A549 (cell line): ENCODE measurements at regions of chr2 and their contacts with region 1.

Region 1: DNA sequence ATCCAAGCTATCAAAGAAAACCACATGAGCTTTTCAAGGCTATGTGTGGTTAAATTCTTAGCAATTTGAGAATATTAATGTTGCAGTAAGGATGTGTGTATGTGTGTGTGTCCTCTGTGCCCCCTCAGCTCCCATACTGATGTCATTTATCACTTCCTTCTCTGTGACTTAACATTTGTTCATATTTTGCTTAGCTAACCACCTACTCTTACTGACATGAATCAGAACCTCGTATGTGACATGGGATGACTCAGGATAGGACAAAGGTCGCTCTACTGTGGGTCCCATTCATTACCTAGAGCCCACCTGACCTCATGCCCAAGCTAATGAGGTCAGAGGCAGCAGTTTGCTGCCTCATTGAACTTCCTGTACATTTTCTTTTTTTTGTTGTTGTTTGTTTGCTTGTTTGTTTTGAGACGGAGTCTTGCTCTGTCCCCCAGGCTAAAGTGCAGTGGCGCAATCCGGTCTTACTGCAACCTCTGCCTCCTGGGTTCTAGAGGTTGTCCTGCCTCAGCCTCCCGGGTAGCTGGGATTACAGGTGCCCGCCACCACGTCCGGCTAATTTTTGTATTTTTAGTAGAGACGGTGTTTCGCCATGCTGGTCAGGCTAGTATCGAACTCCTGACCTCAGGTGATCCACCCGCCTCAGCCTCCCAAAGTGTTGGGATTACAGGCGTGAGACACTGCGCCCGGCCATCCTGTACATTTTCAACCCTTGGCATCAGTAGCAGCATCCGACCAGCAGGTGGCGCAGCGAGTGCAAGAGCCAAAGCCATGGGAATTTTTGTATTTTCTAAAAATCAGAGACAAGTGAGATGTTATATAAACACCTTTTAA is 36.4 kb downstream of the MOGAT1 start:
- DNase-seq: peak; percentile 25 to 78
- ATAC-seq: peak in 1 of 2 experiments; percentile 64; a peak in 3 of 6 replicates
- H3K4me3 ChIP-seq: no peak overlapping the region
- H3K27ac ChIP-seq: peak overlapping the region; percentile 41 to 64; a peak in 4 of 6 replicates
- H3K4me1 ChIP-seq: peaks cover 15% of the 10 kb centered on the region; the same call in 2 of the 3 replicates
- CTCF ChIP-seq: peak; percentile 89
- EP300 ChIP-seq: no peak
- POLR2A ChIP-seq: no peak
- RAD21 ChIP-seq: peak; percentile 84 to 90

Region 2: GRCh38 chr2:222671259-222672067 is 36.4 kb before region 1 on chr2 and contains the start of gene MOGAT1:
- CTCF ChIA-PET with region 1: no interaction called
- POLR2A ChIA-PET with region 1: no interaction called
- DNase-seq: peak in 1 of 2 experiments; percentile 11
- ATAC-seq: peak; percentile 87 to 90
- H3K4me3 ChIP-seq: peak within 1 kb of the TSS; percentile 46
- H3K27ac ChIP-seq: peak within 1 kb of the TSS; percentile 8 to 78; a peak in 4 of 6 replicates
- H3K4me1 ChIP-seq: peaks cover 4% of the 10 kb centered on the region; the same call in 1 of the 3 replicates
- CTCF ChIP-seq: no peak
- EP300 ChIP-seq: no peak
- POLR2A ChIP-seq: no peak
- RAD21 ChIP-seq: no peak
- polyA plus RNA-seq, gene MOGAT1: not detected in 2 replicates

Region 3: DNA sequence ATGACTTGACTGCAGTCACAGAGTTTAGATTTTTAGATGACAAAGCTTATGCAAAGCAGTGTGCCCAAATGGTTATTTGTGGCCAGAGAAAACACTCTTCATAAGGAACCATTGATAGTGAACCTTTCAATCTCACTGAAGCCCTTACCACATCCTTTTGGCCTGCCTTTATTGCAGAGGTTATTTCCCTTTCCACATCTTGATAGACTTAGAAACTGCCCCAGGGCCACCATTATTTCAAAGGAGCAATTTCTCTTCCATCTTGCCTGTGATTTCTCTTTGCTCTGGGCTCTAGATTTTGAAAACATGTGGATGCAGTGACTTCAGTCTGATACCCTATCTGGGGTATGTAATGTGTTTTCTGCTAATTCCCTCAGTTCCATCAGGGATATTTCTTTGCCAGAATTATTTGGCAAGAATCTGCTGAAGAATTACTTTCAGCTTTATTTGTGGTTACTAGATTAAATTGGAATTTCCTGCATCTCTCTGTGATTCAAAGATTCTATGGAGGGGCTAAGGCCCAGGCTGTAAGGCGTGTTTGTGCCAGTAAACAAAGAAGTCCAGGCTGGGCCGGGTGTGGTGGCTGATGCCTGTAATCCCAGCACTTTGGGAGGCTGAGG is 14.5 kb after region 1 on chr2:
- CTCF ChIA-PET with region 1: interaction called, 10 read pairs
- POLR2A ChIA-PET with region 1: no interaction called
- DNase-seq: no peak
- ATAC-seq: no peak
- H3K4me3 ChIP-seq: no peak overlapping the region
- H3K27ac ChIP-seq: no peak overlapping the region
- H3K4me1 ChIP-seq: no peaks in the 10 kb centered on the region
- CTCF ChIP-seq: no peak
- EP300 ChIP-seq: no peak
- POLR2A ChIP-seq: no peak
- RAD21 ChIP-seq: no peak

Region 4: GRCh38 chr2:222860740-222861410 is 153.0 kb after region 1 on chr2 and contains the start of gene ACSL3:
- CTCF ChIA-PET with region 1: interaction called, 60 read pairs
- POLR2A ChIA-PET with region 1: interaction called, 19 read pairs
- DNase-seq: peak; percentile 82 to 95
- ATAC-seq: peak; percentile 95 to 97
- H3K4me3 ChIP-seq: peak within 1 kb of the TSS; percentile 96
- H3K27ac ChIP-seq: peak within 1 kb of the TSS; percentile 97 to 100
- H3K4me1 ChIP-seq: peaks cover 45% of the 10 kb centered on the region
- CTCF ChIP-seq: no peak
- EP300 ChIP-seq: no peak
- POLR2A ChIP-seq: peak; percentile 98
- RAD21 ChIP-seq: peak in 1 of 2 experiments; percentile 45; a peak in 2 of 5 replicates
- polyA plus RNA-seq, gene ACSL3: 160 and 209 TPM in 2 replicates

Region 5: DNA sequence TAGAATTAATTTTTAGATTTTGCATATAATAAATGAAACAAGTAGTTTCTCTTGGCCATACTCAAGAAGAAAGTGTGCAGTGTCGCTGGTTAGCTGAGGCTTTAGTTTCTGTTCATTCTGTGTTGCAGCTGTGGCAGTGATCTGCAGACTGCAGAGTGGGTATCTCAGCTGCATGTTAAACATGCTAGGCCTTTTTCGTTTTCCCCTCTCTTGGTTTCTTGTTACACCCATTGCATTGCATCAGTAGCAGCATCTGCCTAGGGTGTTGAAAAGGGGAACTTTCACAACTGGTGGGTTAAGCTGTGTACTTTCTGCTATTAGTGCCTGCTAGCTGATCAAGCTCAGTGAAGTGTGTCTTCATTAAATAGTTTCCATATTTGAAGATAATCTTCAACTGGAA is 204.2 kb after region 1 on chr2:
- CTCF ChIA-PET with region 1: interaction called, 56 read pairs
- POLR2A ChIA-PET with region 1: no interaction called
- DNase-seq: no peak
- ATAC-seq: no peak
- H3K4me3 ChIP-seq: no peak overlapping the region
- H3K27ac ChIP-seq: no peak overlapping the region
- H3K4me1 ChIP-seq: peaks cover 19% of the 10 kb centered on the region
- CTCF ChIP-seq: no peak
- EP300 ChIP-seq: no peak
- POLR2A ChIP-seq: no peak
- RAD21 ChIP-seq: no peak